Activated B cell treated with CpG ODN at 0.5 μM for 24 hours (primary cell): ENCODE measurements at regions of chr16 and their contacts with region 1.

Region 1: DNA sequence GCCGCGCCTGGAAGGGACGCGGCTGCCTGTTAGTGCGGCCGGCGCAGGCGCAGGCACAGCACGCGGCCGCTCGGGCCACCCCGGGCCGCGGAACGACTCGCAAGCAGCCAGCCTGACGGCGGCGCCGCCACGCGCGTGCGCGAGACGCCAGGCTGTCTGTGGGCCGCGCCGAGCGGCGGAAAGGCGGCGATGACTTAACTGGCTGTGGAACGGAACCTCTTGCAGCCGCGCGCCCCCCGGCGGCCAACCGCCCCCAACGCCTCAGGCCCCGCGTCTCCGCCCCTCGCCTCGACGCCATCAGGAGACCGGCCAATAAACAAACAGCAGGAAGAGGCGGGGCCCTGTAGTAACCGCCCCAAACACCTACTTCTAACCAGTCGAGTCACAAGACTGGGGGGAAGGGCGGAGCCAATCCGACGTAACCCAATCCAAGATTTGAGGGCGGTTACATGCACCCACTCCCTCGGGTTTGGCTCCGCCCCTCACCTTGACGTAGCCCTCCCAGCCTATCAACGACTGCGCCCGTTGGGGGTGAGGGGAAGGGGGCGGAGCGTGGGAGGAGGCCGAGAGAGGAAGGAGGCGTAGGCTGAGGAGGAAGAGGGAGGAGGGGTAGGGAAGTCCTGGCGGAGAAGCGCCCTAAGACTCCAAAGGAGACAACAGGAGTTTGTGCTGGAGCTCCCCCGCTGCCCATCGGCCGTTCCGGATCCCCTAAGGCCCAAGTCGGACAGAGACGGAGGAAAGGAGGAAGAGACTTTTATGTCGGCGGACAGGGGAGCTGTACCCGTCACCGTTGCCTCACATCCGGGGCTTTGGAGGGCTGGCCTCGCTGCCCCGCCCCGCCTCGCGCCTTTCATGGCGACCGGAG is at the start of gene FBRS:
- DNase-seq: peak; percentile 99
- ATAC-seq: peak; percentile 73
- H3K4me3 Mint-ChIP-seq: peak within 1 kb of the TSS; percentile 98
- H3K27ac Mint-ChIP-seq: peak within 1 kb of the TSS; percentile 100
- H3K4me1 Mint-ChIP-seq: peaks cover 37% of the 10 kb centered on the region
- H3K27me3 Mint-ChIP-seq: no peaks in the 10 kb centered on the region
- CTCF ChIP-seq: no peak
- total RNA-seq, gene FBRS: 166 and 204 TPM in 2 replicates

Region 2: GRCh38 chr16:29790183-29790952 is 867.7 kb before region 1 on chr16 and contains the start of gene KIF22:
- CTCF ChIA-PET with region 1: no interaction called
- POLR2A ChIA-PET with region 1: no interaction called
- intact Hi-C with region 1: no loop called
- DNase-seq: peak; percentile 99
- ATAC-seq: peak; percentile 97
- H3K4me3 Mint-ChIP-seq: peak within 1 kb of the TSS; percentile 98
- H3K27ac Mint-ChIP-seq: peak within 1 kb of the TSS; percentile 93
- H3K4me1 Mint-ChIP-seq: peaks cover 34% of the 10 kb centered on the region
- H3K27me3 Mint-ChIP-seq: no peaks in the 10 kb centered on the region
- CTCF ChIP-seq: no peak
- total RNA-seq, gene KIF22: 33.1 and 40.1 TPM in 2 replicates

Region 3: DNA sequence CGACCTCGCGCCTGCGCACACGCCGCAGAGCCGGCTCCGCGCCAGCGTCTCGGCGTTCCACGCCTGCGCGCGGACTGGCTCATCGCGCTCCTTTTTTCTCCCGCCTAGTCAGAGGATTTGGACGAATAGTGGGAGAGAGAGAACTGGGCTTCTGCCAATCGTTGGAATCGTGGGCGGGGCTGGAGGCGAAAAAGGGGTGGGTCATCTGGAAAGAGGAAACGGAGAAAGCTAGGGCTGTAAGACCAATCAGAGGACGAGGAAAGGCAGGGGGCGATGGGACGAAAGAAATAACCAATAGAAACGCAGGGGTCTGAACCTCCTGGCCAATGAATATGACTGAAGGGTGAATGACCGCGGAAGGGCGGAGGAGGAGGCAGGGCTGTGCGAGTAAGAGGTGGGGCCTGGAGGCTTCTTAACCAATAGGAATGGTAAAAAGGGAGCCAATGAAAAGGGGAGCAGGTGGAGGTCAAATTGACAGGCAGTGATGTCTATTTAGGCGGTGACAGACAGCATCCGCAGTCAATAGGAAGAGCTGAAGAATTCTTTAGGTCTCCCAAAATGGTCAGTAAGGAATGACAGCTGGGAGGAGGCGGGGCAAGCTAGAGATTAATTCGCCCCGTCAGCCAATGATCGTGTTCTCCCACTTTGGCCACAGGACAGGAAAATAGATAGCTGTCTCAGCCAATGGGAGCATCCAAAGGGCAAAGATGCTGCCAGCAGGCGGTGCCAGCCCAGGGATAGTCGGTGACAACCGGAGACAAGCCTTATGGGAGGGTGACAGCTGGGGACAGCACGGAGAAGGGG is 287.5 kb before region 1 on chr16 and contains the start of gene TBC1D10B:
- CTCF ChIA-PET with region 1: interaction called, 3 read pairs
- POLR2A ChIA-PET with region 1: interaction called, 5 read pairs
- intact Hi-C with region 1: loop called (anchors 1 kb)
- DNase-seq: peak; percentile 92
- ATAC-seq: peak; percentile 83
- H3K4me3 Mint-ChIP-seq: peak within 1 kb of the TSS; percentile 87
- H3K27ac Mint-ChIP-seq: peak within 1 kb of the TSS; percentile 86
- H3K4me1 Mint-ChIP-seq: peaks cover 52% of the 10 kb centered on the region
- H3K27me3 Mint-ChIP-seq: no peaks in the 10 kb centered on the region
- CTCF ChIP-seq: no peak
- total RNA-seq, gene TBC1D10B: 46.3 and 50.2 TPM in 2 replicates

Region 4: GRCh38 chr16:30526823-30527635 is 131.1 kb before region 1 on chr16:
- CTCF ChIA-PET with region 1: no interaction called
- POLR2A ChIA-PET with region 1: interaction called, 7 read pairs
- intact Hi-C with region 1: loop called (anchors 1 kb)
- DNase-seq: peak; percentile 93
- ATAC-seq: peak; percentile 84
- H3K4me3 Mint-ChIP-seq: peak overlapping the region; percentile 89
- H3K27ac Mint-ChIP-seq: peak overlapping the region; percentile 99
- H3K4me1 Mint-ChIP-seq: peaks cover 21% of the 10 kb centered on the region
- H3K27me3 Mint-ChIP-seq: no peaks in the 10 kb centered on the region
- CTCF ChIP-seq: no peak

Region 5: DNA sequence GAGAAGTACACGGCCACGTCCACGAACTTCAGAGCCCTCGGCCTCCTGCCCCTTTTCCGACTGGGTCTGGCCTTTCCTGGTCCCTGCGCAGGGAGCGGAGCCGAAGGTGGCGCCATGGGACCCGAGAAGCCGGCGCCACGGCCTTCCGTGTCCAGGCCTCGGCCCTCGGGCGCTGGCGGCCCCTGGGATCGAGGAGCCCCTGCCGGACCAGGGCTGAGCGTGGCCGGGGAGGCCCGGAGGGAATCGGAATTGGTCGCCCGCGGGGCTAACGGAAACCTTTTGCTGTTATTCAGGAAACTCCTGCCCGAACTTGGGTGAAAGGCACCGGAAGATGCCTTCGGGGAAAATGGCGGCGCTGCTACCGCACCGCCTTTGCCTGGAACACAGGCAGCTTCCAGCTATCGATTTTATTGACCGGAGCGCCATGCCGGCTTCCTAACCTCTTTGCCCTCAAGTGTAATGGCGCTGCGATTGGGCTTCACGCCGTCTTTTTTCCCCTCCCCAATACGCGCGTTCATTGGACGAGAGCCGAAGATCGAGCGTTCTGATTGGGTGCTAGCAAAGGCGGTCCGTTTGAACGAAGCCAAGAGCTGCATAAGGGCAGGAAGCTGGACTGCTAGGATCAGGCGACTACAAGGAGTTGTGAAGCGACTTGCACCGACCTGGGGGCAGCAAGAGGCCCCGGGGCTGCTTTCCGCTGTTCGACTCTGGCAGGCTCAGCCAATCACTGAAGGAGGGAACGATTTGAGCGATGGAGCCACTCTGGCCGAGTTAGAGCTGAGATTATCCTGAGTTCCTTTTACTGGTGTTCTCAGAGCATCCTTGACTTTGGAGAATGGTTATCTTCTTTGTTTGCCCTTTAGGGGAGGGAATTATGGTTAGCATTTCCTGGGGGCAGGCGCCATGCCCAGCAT is 47.9 kb before region 1 on chr16 and contains the start of gene ZNF689:
- CTCF ChIA-PET with region 1: no interaction called
- POLR2A ChIA-PET with region 1: interaction called, 9 read pairs
- intact Hi-C with region 1: loop called (anchors 1 kb)
- DNase-seq: peak; percentile 90
- ATAC-seq: peak; percentile 87
- H3K4me3 Mint-ChIP-seq: peak within 1 kb of the TSS; percentile 93
- H3K27ac Mint-ChIP-seq: peak within 1 kb of the TSS; percentile 95
- H3K4me1 Mint-ChIP-seq: peaks cover 19% of the 10 kb centered on the region
- H3K27me3 Mint-ChIP-seq: no peaks in the 10 kb centered on the region
- CTCF ChIP-seq: no peak
- total RNA-seq, gene ZNF689: 10.1 and 11.6 TPM in 2 replicates

Region 6: GRCh38 chr16:30698139-30698815 is 40.2 kb after region 1 on chr16:
- CTCF ChIA-PET with region 1: interaction called, 44 read pairs
- POLR2A ChIA-PET with region 1: interaction called, 107 read pairs
- intact Hi-C with region 1: loop called (anchors 1 kb)
- DNase-seq: peak; percentile 96
- ATAC-seq: peak; percentile 75
- H3K4me3 Mint-ChIP-seq: peak overlapping the region; percentile 97
- H3K27ac Mint-ChIP-seq: peak overlapping the region; percentile 100
- H3K4me1 Mint-ChIP-seq: peaks cover 30% of the 10 kb centered on the region
- H3K27me3 Mint-ChIP-seq: no peaks in the 10 kb centered on the region
- CTCF ChIP-seq: no peak

Region 7: GRCh38 chr16:30844671-30845449 is 186.8 kb after region 1 on chr16:
- CTCF ChIA-PET with region 1: no interaction called
- POLR2A ChIA-PET with region 1: no interaction called
- intact Hi-C with region 1: no loop called
- DNase-seq: peak; percentile 31
- ATAC-seq: peak; percentile 93
- H3K4me3 Mint-ChIP-seq: peak overlapping the region; percentile 65
- H3K27ac Mint-ChIP-seq: peak overlapping the region; percentile 77
- H3K4me1 Mint-ChIP-seq: peaks cover 11% of the 10 kb centered on the region
- H3K27me3 Mint-ChIP-seq: no peaks in the 10 kb centered on the region
- CTCF ChIP-seq: peak; percentile 71

Region 8: GRCh38 chr16:30957456-30958174 is 299.5 kb after region 1 on chr16 and contains the start of gene SETD1A:
- CTCF ChIA-PET with region 1: no interaction called
- POLR2A ChIA-PET with region 1: no interaction called
- intact Hi-C with region 1: loop called (anchors 1 kb)
- DNase-seq: peak; percentile 89
- ATAC-seq: peak; percentile 87
- H3K4me3 Mint-ChIP-seq: peak within 1 kb of the TSS; percentile 95
- H3K27ac Mint-ChIP-seq: peak within 1 kb of the TSS; percentile 99
- H3K4me1 Mint-ChIP-seq: peaks cover 31% of the 10 kb centered on the region
- H3K27me3 Mint-ChIP-seq: no peaks in the 10 kb centered on the region
- CTCF ChIP-seq: no peak
- total RNA-seq, gene SETD1A: 29.6 and 32.8 TPM in 2 replicates